CD4-positive, alpha-beta memory T cell (primary cell): ENCODE measurements at regions of chr3 and their contacts with region 1.

Region 1: GRCh38 chr3:71725279-71725991 is at the start of gene EIF4E3:
- DNase-seq: peak in 4 of 5 donors; percentile 36 to 47 (median 45)
- H3K4me3 ChIP-seq: peak within 1 kb of the TSS; percentile 85 to 95
- H3K4me3 Mint-ChIP-seq: peak within 1 kb of the TSS; percentile 94 to 98 (median 97)
- H3K27ac ChIP-seq: peak within 1 kb of the TSS; percentile 77
- H3K27ac Mint-ChIP-seq: peak within 1 kb of the TSS; percentile 92 to 99 (median 97)
- H3K4me1 ChIP-seq: peaks cover 81% of the 10 kb centered on the region
- H3K4me1 Mint-ChIP-seq: peaks cover 56 to 79% (median 69%) of the 10 kb centered on the region in 4 donors
- H3K27me3 ChIP-seq: no peaks in the 10 kb centered on the region
- H3K27me3 Mint-ChIP-seq: no peaks in the 10 kb centered on the region
- total RNA-seq, gene EIF4E3: 51.5 to 58.7 TPM

Region 2: DNA sequence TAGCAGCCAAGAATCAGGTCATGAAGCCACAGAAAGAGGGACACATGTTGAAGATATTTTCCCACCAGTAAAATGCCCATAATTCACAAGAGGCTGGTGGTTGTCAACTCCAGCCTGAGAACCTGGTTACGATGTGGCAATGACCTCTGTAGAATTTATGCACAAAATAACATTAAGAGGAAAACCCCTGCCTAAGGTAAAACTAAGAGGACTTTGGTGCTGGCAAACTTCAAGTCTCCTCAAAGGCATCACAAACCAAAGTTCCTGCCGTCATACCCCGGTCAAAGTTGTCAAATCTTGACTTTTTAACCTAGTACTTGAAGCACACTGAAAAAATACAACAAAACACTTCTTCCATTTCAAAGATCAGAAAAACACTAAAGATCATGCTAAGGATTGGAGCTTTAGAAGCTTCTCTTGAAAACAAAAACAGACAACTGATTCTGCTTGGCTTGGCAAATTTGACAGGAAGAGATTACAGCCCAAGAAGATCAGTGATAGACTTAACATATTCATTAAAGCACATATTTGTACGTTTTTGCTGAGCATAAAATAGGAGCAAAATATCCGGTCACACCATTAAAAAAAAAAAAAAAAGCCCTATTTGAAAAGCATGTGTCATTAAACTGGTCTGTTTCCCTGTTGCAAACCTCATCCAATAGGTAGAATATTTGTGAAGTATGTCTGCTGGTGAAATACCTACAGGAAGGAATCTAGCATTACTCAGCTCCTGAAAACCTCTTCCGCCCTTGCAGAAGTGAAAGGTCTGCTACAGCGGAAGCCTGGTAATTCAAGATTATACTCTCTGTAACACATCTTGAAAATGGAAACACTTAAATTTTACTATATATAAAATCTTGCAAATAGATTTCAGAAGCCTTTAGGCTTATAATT is 23.1 kb before region 1 on chr3:
- CTCF ChIA-PET with region 1: interaction called, 5 read pairs
- POLR2A ChIA-PET with region 1: interaction called, 27 read pairs
- intact Hi-C with region 1: no loop called
- DNase-seq: peak; percentile 43 to 70 (median 59)
- H3K4me3 ChIP-seq: no peak overlapping the region
- H3K4me3 Mint-ChIP-seq: peak overlapping the region; percentile 46 to 83 (median 76)
- H3K27ac ChIP-seq: peak overlapping the region; percentile 41
- H3K27ac Mint-ChIP-seq: peak overlapping the region; percentile 77 to 90 (median 86)
- H3K4me1 ChIP-seq: peaks cover 63% of the 10 kb centered on the region
- H3K4me1 Mint-ChIP-seq: peaks cover 53 to 77% (median 63%) of the 10 kb centered on the region in 4 donors
- H3K27me3 ChIP-seq: no peaks in the 10 kb centered on the region
- H3K27me3 Mint-ChIP-seq: no peaks in the 10 kb centered on the region

Region 3: DNA sequence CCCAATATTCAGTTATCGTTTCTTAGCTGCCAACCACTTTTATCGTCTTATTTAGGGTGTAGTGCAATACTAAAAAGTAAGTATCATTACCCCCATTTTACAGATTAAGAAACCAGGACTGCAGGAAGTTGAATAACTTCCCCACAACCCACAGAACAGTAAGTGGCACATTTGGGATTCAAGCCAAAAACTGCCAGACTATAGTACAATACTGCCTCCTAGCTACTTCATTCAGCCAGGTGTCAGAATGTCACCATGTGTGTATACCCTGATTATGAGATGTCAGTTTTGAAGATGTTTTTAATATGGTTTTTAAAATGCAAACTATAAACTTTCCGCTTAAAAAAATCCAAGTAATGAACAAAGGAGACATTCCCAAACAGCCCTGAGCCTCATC is 133.7 kb after region 1 on chr3:
- CTCF ChIA-PET with region 1: interaction called, 71 read pairs
- POLR2A ChIA-PET with region 1: interaction called, 3 read pairs
- intact Hi-C with region 1: loop called (anchors 1 kb)
- DNase-seq: peak; percentile 33 to 68 (median 64)
- H3K4me3 ChIP-seq: no peak overlapping the region
- H3K4me3 Mint-ChIP-seq: peak overlapping the region in 1 of 8 donors; percentile 21
- H3K27ac ChIP-seq: no peak overlapping the region
- H3K27ac Mint-ChIP-seq: peak overlapping the region in 1 of 7 donors; percentile 33
- H3K4me1 ChIP-seq: peaks cover 7% of the 10 kb centered on the region
- H3K4me1 Mint-ChIP-seq: peaks cover 5 to 11% (median 7%) of the 10 kb centered on the region in 4 donors
- H3K27me3 ChIP-seq: no peaks in the 10 kb centered on the region
- H3K27me3 Mint-ChIP-seq: peaks cover 17 to 26% of the 10 kb centered on the region in 2 donors

Region 4: DNA sequence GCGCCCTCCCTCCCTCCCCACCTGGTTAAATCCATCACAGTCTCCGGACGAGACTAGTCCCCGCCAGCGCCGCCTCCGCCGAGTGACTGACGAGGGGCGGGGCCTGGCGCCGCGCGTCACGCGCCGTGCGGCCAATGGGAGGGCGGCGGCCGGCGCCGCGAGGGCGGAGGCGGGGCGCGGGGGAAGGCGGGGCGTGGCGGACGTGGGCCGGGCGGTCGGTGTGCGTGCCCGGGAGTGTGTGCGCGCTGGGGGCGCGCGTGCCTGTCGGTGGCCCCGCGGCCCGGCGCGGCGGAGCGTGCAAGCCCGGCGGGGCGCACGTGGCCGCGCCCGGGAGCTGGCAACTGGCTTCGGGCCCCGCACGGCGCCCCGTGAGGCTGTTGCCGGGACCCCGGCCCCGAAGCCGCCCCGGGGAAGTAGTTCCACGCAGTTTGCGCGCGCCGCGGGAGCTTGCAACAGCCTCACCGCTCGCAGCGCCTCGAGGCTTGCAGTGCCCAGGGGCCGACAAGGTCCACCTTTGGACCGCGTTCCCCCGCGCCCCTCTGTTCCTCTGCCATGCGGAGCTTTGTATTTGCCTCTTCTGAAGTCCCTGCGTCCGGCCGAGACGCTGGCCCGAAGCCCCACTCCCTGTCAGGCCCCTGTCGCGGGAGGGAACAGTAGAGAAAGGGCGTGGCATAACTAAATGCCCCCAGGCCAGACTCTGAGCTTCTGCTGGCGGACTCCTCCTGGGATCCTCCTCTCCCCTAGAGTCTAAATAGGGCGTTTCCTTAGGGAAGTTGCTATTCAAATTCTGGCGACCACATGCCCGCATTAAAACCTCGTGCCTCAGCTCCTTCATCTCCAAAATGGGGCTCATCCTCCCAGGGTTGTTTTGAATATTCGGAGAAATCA is 721.9 kb after region 1 on chr3:
- CTCF ChIA-PET with region 1: no interaction called
- POLR2A ChIA-PET with region 1: interaction called, 8 read pairs
- intact Hi-C with region 1: loop called (anchors 2 kb)
- DNase-seq: peak; percentile 88 to 97 (median 95)
- H3K4me3 ChIP-seq: peak overlapping the region in 1 of 2 donors; percentile 79
- H3K4me3 Mint-ChIP-seq: peak overlapping the region; percentile 66 to 85 (median 73)
- H3K27ac ChIP-seq: peak overlapping the region; percentile 64
- H3K27ac Mint-ChIP-seq: peak overlapping the region in 4 of 7 donors; percentile 26 to 83 (median 68)
- H3K4me1 ChIP-seq: peaks cover 49% of the 10 kb centered on the region
- H3K4me1 Mint-ChIP-seq: peaks cover 34 to 43% (median 39%) of the 10 kb centered on the region in 4 donors
- H3K27me3 ChIP-seq: no peaks in the 10 kb centered on the region
- H3K27me3 Mint-ChIP-seq: peaks cover 9 to 10% of the 10 kb centered on the region in 2 donors

Region 5: DNA sequence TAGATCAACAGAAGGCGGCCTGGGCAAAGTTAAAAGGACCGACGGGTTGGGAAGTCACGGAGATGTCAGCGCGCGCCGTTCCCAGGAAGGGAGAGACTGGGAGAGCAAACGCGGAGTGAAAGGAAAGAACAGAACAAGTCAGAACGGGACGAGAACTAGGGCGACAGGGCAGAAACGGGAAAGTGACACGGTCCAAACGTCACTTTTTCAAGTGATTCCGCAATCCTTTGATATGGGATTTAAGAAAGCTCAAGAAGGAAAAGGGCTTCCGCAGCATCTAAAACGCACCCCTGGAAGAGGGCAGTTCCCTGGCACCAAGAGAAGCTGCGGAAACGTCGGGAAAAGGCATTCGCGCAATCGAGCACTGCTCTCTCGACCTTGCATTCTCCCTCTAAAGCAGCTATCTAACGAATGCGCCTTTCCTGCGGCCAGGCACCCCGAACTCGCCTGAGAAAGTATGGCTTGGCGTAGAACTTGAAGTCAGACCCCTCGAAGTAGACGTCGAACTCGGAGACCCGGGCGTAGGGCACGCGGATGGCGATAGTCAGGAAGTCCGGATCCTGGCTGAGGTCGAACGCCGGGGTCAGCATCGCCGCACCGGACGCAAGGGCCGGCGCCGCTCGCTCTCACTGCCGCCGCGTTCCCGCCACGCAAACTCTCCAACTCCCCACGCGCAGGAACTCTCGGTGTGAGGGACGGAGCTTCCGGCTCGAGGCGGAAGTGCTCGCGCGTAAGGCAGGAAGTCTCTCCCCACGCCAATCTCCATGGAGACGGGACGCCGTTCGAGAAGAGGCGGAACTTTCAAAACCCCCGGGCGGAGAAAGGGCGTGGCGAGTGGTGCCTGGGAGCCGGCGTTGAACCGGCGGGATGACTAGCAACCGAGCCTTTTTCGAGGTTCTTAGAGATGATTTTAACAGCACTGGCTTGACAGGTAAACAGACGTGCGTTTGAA is 1122.6 kb after region 1 on chr3 and contains the start of gene SHQ1:
- CTCF ChIA-PET with region 1: no interaction called
- POLR2A ChIA-PET with region 1: no interaction called
- intact Hi-C with region 1: loop called (anchors 2 kb)
- DNase-seq: peak; percentile 91 to 96 (median 92)
- H3K4me3 ChIP-seq: peak within 1 kb of the TSS; percentile 82 to 97
- H3K4me3 Mint-ChIP-seq: peak within 1 kb of the TSS; percentile 94 to 97 (median 96)
- H3K27ac ChIP-seq: peak within 1 kb of the TSS; percentile 61
- H3K27ac Mint-ChIP-seq: peak within 1 kb of the TSS; percentile 78 to 95 (median 93)
- H3K4me1 ChIP-seq: peaks cover 47% of the 10 kb centered on the region
- H3K4me1 Mint-ChIP-seq: peaks cover 38 to 60% (median 48%) of the 10 kb centered on the region in 4 donors
- H3K27me3 ChIP-seq: no peaks in the 10 kb centered on the region
- H3K27me3 Mint-ChIP-seq: peaks cover 0 to 2% of the 10 kb centered on the region in 2 donors
- total RNA-seq, gene SHQ1: 28.7 to 31.2 TPM